IMR-90 (cell line): ENCODE measurements at regions of chr6 and their contacts with region 1.

Region 1: GRCh38 chr6:63527658-63528514 is 44.4 kb upstream of the LOC128125822 start:
- DNase-seq: peak; percentile 100
- ATAC-seq: peak; percentile 95
- H3K4me3 ChIP-seq: no peak overlapping the region
- H3K27ac ChIP-seq: peak overlapping the region; percentile 81; the same call in 1 of the 2 replicates
- H3K4me1 ChIP-seq: peaks cover 10% of the 10 kb centered on the region
- H3K27me3 ChIP-seq: no peaks in the 10 kb centered on the region
- CTCF ChIP-seq: no peak
- POLR2A ChIP-seq: no peak
- RAD21 ChIP-seq: no peak

Region 2: DNA sequence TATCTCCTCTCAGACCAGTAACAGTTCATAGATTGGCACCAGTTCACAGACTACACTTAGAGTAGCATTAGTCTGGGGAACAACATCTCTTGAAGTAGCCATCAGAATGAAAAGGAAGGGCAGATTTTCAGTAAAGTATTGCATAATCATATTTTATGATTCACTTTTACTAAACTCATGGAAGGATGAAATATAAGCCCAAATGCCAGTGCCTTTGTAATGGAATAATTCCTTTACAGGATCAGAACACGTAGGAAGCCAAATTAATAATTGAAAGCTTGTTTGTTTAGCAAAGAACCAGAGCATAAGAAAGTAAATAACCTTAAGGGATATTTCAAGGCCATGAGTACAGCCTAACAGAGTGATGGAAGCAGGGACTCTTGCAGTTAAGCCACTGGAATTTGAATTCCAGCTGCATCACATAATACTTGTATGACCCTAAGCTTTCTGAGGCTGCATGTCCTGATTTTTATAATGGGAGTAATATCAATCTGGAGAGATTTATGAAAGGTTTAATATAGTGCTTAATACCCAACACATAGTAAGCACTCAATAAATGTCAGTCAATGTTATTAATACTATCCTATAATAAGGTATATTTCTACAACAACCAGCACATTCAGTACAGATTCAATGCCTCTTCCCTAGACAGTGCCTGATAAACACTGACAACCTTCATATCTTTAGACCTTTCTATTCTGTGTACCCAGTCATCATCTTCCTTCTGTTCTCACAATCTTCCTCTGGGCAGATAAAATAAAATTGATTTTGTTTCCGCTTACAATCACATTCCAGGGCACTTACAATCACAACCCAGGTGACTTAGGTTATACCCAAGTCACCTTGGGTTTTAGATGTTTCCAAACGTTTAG is 33.2 kb after region 1 on chr6:
- CTCF ChIA-PET with region 1: no interaction called
- POLR2A ChIA-PET with region 1: no interaction called
- dilution Hi-C with region 1: no loop called
- in situ Hi-C with region 1: no loop called
- intact Hi-C with region 1: loop called (anchors 2 kb)
- DNase-seq: peak; percentile 63
- ATAC-seq: peak; percentile 92
- H3K4me3 ChIP-seq: no peak overlapping the region
- H3K27ac ChIP-seq: no peak overlapping the region
- H3K4me1 ChIP-seq: peaks cover 2% of the 10 kb centered on the region; the same call in 1 of the 2 replicates
- H3K27me3 ChIP-seq: no peaks in the 10 kb centered on the region
- CTCF ChIP-seq: no peak
- POLR2A ChIP-seq: no peak
- RAD21 ChIP-seq: no peak